ENCODE measurements at regions of chr17 and their contacts with region 1.

Region 1: DNA sequence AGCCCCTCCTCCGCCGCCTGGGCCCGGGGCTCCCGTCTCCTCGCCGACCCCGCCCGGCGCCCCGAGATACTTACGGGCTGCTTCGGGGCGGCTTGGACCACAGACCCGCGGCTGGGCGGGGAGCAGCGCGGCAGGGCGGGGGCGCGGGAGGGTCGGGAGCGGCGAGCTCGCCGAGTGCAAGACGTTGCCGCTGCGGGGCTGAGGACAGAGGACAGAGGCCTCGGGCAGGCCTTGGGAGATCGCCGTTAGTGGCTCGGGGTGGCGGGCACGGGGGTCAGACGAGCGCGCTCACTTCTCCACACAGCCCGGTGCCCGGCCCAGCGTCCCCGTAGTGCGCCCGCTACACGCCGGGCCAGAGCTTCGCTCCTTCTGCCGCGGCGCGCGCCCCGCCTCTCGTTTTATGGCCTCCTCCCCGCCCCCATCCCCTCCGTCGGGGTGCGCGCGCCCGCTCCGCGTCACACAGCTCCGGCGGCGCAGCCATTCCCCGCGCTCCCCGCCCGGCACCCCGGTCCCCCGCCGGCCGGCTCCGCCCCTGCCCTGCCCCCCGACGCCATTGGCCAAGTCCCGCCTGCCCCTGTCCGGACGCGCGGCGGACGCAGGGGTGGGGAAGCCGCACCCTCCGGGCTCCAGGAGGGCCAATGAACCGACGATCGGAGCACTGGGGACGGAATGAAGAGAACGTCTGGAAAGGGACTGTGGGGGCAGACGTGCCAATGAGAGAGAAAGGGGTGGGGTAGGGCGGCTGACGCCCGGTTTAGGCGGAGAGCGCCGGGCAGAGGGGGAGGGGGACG is at the start of gene TOB1:
- DNase-seq: peak; percentile 96 to 98
- H3K4me3 ChIP-seq: peak within 1 kb of the TSS; percentile 83
- H3K27ac ChIP-seq: peak within 1 kb of the TSS; percentile 95
- H3K4me1 ChIP-seq: peaks cover 52% of the 10 kb centered on the region
- H3K27me3 ChIP-seq: no peaks in the 10 kb centered on the region
- CTCF ChIP-seq: no peak
- total RNA-seq, gene TOB1: 54.2 and 67.9 TPM in 2 replicates

Region 2: DNA sequence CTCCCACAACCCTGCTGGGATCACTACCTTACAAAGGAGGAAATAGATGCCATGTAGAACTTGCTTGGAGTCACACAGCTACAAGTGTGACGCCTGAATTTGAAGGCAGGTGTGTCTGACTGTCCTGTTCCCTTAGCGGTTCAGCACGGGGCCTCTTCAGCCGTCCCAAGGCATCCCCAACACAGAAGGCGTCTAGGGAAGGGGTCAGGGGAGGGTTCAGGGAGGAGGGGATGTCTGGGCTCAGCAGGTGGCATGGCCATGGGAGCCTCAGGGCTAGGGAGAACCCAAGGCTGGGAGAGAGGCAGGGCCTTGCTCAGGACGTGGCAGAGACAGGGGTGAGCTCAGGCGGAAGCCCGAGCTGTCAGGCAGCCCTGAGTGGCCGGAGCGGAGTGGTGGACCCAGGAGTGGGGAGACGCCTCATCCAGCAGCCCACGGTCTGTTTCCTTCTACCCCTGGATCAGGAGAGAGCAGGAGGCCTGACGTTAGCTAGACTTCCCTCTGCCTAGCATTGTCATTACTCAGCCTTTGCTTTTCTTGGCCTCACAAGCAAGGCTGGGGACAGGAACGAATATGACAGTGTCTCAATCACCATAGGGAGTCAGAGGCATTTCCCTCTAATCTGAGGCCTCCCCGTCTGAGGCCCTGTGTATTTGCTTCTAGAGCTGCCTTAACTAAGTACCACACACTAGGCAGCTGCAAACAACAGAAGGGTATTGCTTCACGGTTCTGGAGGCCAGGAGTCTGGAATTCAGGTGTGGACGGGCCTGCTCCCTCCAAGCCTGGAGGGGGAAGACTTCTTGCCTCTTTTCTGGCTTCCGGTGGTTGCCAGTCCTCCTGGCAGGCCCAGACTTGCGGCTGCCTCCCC is 67.5 kb before region 1 on chr17:
- CTCF ChIA-PET with region 1: no interaction called
- POLR2A ChIA-PET with region 1: no interaction called
- intact Hi-C with region 1: no loop called
- DNase-seq: no peak
- H3K4me3 ChIP-seq: no peak overlapping the region
- H3K27ac ChIP-seq: no peak overlapping the region
- H3K4me1 ChIP-seq: no peaks in the 10 kb centered on the region
- H3K27me3 ChIP-seq: no peaks in the 10 kb centered on the region
- CTCF ChIP-seq: no peak

Region 3: GRCh38 chr17:50816771-50817751 is 49.1 kb before region 1 on chr17:
- CTCF ChIA-PET with region 1: no interaction called
- POLR2A ChIA-PET with region 1: interaction called, 10 read pairs
- intact Hi-C with region 1: no loop called
- DNase-seq: peak in 1 of 2 experiments; percentile 24
- H3K4me3 ChIP-seq: no peak overlapping the region
- H3K27ac ChIP-seq: no peak overlapping the region
- H3K4me1 ChIP-seq: peaks cover 20% of the 10 kb centered on the region
- H3K27me3 ChIP-seq: no peaks in the 10 kb centered on the region
- CTCF ChIP-seq: peak; percentile 76

Region 4: GRCh38 chr17:50883850-50884438 is 17.8 kb after region 1 on chr17:
- CTCF ChIA-PET with region 1: interaction called, 5 read pairs
- POLR2A ChIA-PET with region 1: interaction called, 28 read pairs
- intact Hi-C with region 1: loop called (anchors 1 kb)
- DNase-seq: no peak
- H3K4me3 ChIP-seq: peak overlapping the region; percentile 21; the same call in 1 of the 2 replicates
- H3K27ac ChIP-seq: peak overlapping the region; percentile 85
- H3K4me1 ChIP-seq: peaks cover 46% of the 10 kb centered on the region
- H3K27me3 ChIP-seq: no peaks in the 10 kb centered on the region
- CTCF ChIP-seq: no peak

Region 5: GRCh38 chr17:50919321-50920085 is 53.3 kb after region 1 on chr17:
- CTCF ChIA-PET with region 1: interaction called, 4 read pairs
- POLR2A ChIA-PET with region 1: interaction called, 6 read pairs
- intact Hi-C with region 1: loop called (anchors 1 kb)
- DNase-seq: peak; percentile 95
- H3K4me3 ChIP-seq: no peak overlapping the region; the same call in 1 of the 2 replicates
- H3K27ac ChIP-seq: peak overlapping the region; percentile 63
- H3K4me1 ChIP-seq: peaks cover 93% of the 10 kb centered on the region
- H3K27me3 ChIP-seq: no peaks in the 10 kb centered on the region
- CTCF ChIP-seq: no peak

Region 6: GRCh38 chr17:50949989-50950881 is 84.1 kb after region 1 on chr17:
- CTCF ChIA-PET with region 1: interaction called, 3 read pairs
- POLR2A ChIA-PET with region 1: interaction called, 16 read pairs
- intact Hi-C with region 1: loop called (anchors 1 kb)
- DNase-seq: peak; percentile 91 to 96
- H3K4me3 ChIP-seq: peak overlapping the region; percentile 34; the same call in 1 of the 2 replicates
- H3K27ac ChIP-seq: peak overlapping the region; percentile 73
- H3K4me1 ChIP-seq: peaks cover 59% of the 10 kb centered on the region
- H3K27me3 ChIP-seq: no peaks in the 10 kb centered on the region
- CTCF ChIP-seq: peak; percentile 90

Measured in PC-9 (cell line).